Upper lobe of right lung (tissue), 1 donor: ENCODE measurements at regions of chr20 and their contacts with region 1.

Region 1: DNA sequence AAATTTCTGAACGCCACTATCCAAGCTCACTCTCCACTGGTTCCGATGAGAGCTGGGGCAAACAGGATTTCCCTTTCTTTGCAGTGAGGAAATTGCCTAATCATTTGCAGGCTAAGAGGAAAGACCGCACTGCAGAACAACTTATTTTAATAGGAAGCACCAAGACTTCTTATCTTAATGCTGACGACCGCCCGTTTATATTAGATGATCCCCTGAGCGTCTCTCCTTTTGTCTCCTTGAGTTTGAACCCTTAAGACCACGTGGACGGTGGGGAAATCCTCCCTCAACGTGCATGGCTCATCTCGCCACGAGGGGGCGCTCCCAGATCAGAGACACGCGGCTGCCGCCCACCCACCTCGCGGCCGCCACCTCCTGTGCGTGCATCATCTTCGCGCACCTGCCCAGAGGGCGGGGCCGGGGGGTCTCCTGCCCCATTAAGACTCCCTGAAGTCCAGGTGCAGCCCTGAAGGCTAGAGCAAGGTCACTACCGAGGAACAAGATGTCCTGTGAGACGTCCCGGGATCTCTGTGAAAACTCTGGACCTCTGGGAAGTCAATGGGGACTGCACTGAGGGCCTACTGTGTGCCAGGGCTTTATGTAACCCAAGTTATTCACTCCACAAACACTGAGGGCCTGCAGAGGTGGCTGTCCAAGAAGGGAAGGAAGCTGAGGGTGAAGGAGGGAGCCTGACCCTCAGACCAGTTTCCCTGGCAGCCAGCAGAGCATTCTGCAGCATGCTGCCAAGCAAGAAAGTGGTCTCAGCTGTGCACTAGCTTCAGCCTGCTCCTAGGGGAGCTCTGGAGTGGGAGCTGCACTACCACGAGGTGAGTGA is 28.1 kb downstream of the PDYN start:
- DNase-seq: peak; percentile 86
- ATAC-seq: peak; percentile 86
- H3K4me3 ChIP-seq: peak overlapping the region; percentile 17
- H3K27ac ChIP-seq: no peak overlapping the region
- H3K4me1 ChIP-seq: peaks cover 11% of the 10 kb centered on the region
- H3K27me3 ChIP-seq: peaks cover 21% of the 10 kb centered on the region
- CTCF ChIP-seq: peak; percentile 94

Region 2: GRCh38 chr20:1830240-1830639 is 135.5 kb before region 1 on chr20:
- intact Hi-C with region 1: no loop called
- DNase-seq: no peak
- ATAC-seq: peak; percentile 7
- H3K4me3 ChIP-seq: no peak overlapping the region
- H3K27ac ChIP-seq: peak overlapping the region; percentile 6
- H3K4me1 ChIP-seq: peaks cover 9% of the 10 kb centered on the region
- H3K27me3 ChIP-seq: peaks cover 5% of the 10 kb centered on the region
- CTCF ChIP-seq: no peak

Region 3: GRCh38 chr20:1920252-1920651 is 45.5 kb before region 1 on chr20:
- intact Hi-C with region 1: no loop called
- DNase-seq: no peak
- ATAC-seq: no peak
- H3K4me3 ChIP-seq: no peak overlapping the region
- H3K27ac ChIP-seq: no peak overlapping the region
- H3K4me1 ChIP-seq: no peaks in the 10 kb centered on the region
- H3K27me3 ChIP-seq: no peaks in the 10 kb centered on the region
- CTCF ChIP-seq: no peak

Region 4: GRCh38 chr20:2032155-2032554 is 66.4 kb after region 1 on chr20:
- intact Hi-C with region 1: no loop called
- DNase-seq: no peak
- ATAC-seq: no peak
- H3K4me3 ChIP-seq: no peak overlapping the region
- H3K27ac ChIP-seq: no peak overlapping the region
- H3K4me1 ChIP-seq: no peaks in the 10 kb centered on the region
- H3K27me3 ChIP-seq: peaks cover 56% of the 10 kb centered on the region
- CTCF ChIP-seq: no peak

Region 5: DNA sequence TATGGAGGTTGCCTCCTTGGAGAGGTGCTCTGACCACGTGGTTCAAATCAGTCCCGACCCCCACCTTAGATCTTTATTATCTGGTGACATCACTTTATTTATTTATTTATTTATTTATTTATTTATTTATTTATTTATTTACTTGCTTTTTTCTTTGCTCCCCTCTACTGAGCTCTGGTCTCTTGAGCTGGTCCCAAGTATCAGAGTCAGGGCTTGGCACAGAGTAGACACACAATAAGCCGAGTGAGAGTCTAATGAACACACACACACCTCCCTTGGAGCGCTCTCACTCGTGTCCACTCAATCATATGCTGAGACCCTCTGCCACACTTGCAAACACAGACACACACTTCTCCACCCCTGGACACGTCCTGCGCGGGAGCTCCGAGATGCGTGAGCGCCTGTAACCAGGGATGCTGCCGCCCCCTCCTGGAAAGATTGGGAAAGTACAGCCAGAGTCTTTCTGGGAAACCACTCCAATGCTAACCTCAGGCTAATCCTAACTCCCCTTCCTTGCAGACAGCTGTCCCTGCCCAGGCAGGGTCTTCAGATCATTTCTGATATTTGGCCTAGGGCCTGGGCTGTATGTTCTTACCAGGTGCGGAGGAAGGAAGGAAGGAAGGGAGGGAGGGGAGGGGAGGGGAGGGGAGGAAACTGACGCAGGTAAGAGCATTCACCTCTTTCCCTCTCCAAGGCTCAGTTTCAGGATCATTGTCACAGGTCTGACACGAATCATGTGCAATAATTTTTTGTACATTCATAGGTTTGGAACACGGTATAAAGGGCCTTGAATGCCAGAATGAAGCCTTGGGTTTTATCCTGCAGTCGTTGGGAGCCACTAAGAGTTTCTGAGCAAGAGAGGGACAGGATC is 206.8 kb after region 1 on chr20:
- intact Hi-C with region 1: loop called (anchors 10 kb)
- DNase-seq: peak; percentile 80
- ATAC-seq: peak; percentile 92
- H3K4me3 ChIP-seq: no peak overlapping the region
- H3K27ac ChIP-seq: no peak overlapping the region
- H3K4me1 ChIP-seq: peaks cover 4% of the 10 kb centered on the region
- H3K27me3 ChIP-seq: peaks cover 4% of the 10 kb centered on the region
- CTCF ChIP-seq: peak; percentile 92